ENCODE measurements at regions of chrX and their contacts with region 1.

Region 1: GRCh38 chrX:26918633-26919032 is 544.5 kb downstream of the PPP4R3C start:
- DNase-seq: peak; percentile 21 to 42
- H3K4me3 ChIP-seq: no peak overlapping the region
- H3K4me3 Mint-ChIP-seq: no peak overlapping the region
- H3K27ac Mint-ChIP-seq: no peak overlapping the region
- H3K4me1 ChIP-seq: no peaks in the 10 kb centered on the region
- H3K4me1 Mint-ChIP-seq: no peaks in the 10 kb centered on the region
- H3K27me3 ChIP-seq: no peaks in the 10 kb centered on the region
- H3K27me3 Mint-ChIP-seq: no peaks in the 10 kb centered on the region
- CTCF ChIP-seq: peak in 1 of 2 experiments; percentile 24

Region 2: DNA sequence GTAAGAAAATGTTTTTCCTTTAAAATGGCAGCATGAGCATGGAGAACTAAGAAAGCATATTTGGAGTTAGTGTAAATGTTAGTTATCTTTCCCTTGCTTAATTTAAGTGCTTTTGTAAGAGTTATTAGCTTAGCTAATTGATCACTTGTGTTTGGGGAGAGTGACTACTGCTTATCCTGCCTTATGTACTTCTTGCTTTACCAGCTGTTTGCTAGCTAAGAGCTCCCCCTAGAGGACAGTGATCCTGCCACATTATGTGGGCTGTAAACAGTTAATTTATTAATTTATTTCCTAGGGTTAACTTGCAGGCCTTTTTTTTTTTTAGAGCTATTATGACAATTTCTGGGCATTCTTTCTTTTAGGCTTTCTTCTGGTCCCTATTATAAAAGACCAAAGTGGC is 266.9 kb before region 1 on chrX:
- CTCF ChIA-PET with region 1: no interaction called
- POLR2A ChIA-PET with region 1: no interaction called
- intact Hi-C with region 1: loop called (anchors 5 kb)
- DNase-seq: no peak
- H3K4me3 ChIP-seq: no peak overlapping the region
- H3K4me3 Mint-ChIP-seq: no peak overlapping the region
- H3K27ac Mint-ChIP-seq: no peak overlapping the region
- H3K4me1 ChIP-seq: no peaks in the 10 kb centered on the region
- H3K4me1 Mint-ChIP-seq: no peaks in the 10 kb centered on the region
- H3K27me3 ChIP-seq: no peaks in the 10 kb centered on the region
- H3K27me3 Mint-ChIP-seq: peaks cover 2% of the 10 kb centered on the region
- CTCF ChIP-seq: no peak

Region 3: DNA sequence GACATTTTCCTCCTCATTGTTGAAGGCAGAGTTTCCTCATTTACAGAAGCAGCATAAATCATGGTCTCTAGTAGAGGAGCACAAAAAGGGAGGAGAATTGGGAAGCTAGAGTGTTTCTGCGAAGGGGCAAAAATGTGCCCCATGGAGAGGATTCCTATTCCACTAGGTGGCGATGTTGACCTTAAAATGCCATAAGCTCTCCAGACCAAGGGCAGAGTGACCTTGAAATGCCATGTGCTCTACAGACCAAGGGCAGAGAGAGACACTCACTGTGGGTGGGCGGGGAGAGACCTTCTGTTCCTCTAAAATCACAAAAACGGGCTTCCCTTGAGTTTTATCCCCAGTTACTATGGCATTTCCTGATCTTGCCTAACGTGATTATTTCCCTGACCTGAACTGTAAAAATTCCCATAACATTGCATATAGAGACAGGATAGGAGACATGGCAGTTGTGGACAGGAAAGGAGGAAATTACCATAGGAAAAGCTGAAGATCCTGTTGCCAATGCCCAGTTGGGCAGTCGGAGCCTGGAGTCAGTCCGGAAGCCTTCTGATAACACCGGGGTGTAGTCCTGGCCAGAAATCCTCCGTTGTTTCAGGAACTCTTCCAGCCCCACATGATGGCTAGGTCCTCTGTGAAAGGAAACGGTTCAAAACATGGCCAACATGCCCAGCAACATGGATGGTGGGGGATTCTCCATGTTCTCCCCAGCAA is 135.0 kb before region 1 on chrX:
- CTCF ChIA-PET with region 1: no interaction called
- POLR2A ChIA-PET with region 1: no interaction called
- intact Hi-C with region 1: loop called (anchors 1 kb)
- DNase-seq: peak in 1 of 2 experiments; percentile 31
- H3K4me3 ChIP-seq: no peak overlapping the region
- H3K4me3 Mint-ChIP-seq: no peak overlapping the region
- H3K27ac Mint-ChIP-seq: no peak overlapping the region
- H3K4me1 ChIP-seq: no peaks in the 10 kb centered on the region
- H3K4me1 Mint-ChIP-seq: no peaks in the 10 kb centered on the region
- H3K27me3 ChIP-seq: no peaks in the 10 kb centered on the region
- H3K27me3 Mint-ChIP-seq: no peaks in the 10 kb centered on the region
- CTCF ChIP-seq: peak; percentile 6 to 47

Region 4: DNA sequence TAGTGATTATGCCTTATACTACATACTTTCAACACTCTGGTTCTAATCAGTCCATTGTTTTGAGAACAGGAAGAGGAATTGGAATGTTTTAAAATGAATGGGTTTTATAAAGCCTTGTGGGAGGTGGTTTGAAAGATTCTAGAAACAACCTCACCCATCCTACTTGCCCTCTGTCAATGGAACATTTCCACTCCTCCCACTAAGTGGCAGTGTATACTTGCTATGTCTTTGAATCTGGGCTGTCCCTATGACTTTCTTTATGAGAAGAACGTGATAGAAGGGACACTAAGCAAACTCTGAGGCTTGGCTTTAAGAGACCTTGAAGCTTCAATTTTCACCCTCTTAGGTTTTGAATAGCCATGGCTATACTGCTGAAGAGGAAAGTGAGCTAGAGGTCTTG is 66.7 kb before region 1 on chrX:
- CTCF ChIA-PET with region 1: no interaction called
- POLR2A ChIA-PET with region 1: no interaction called
- intact Hi-C with region 1: loop called (anchors 1 kb)
- DNase-seq: peak in 1 of 2 experiments; percentile 5
- H3K4me3 ChIP-seq: no peak overlapping the region
- H3K4me3 Mint-ChIP-seq: no peak overlapping the region
- H3K27ac Mint-ChIP-seq: no peak overlapping the region
- H3K4me1 ChIP-seq: no peaks in the 10 kb centered on the region
- H3K4me1 Mint-ChIP-seq: no peaks in the 10 kb centered on the region
- H3K27me3 ChIP-seq: no peaks in the 10 kb centered on the region
- H3K27me3 Mint-ChIP-seq: no peaks in the 10 kb centered on the region
- CTCF ChIP-seq: no peak

Region 5: DNA sequence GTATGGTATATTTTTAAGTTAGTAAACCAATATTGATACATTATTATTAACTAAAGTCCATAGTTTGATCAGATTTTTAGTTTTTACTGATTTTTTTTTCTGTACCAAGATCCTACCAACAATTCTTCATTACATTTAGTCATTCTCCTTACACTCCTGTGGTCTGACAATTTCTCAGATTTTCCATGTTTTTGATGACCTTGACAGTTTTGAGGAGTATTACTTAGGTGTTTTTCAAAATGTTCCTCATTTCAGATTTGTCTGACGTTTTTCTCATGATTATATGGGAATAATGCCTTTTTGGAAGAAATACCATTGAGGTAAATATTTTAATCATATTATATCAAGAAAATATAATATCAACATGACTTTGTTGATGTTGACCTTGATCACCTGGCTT is 120.7 kb after region 1 on chrX:
- CTCF ChIA-PET with region 1: no interaction called
- POLR2A ChIA-PET with region 1: no interaction called
- intact Hi-C with region 1: no loop called
- DNase-seq: no peak
- H3K4me3 ChIP-seq: no peak overlapping the region
- H3K4me3 Mint-ChIP-seq: no peak overlapping the region
- H3K27ac Mint-ChIP-seq: no peak overlapping the region
- H3K4me1 ChIP-seq: no peaks in the 10 kb centered on the region
- H3K4me1 Mint-ChIP-seq: no peaks in the 10 kb centered on the region
- H3K27me3 ChIP-seq: no peaks in the 10 kb centered on the region
- H3K27me3 Mint-ChIP-seq: no peaks in the 10 kb centered on the region
- CTCF ChIP-seq: no peak

Measured in Caco-2 (cell line).